Posterior vena cava (tissue), 2 donors: ENCODE measurements at regions of chr21 and their contacts with region 1.

Region 1: GRCh38 chr21:35178827-35179226 is 129.7 kb upstream of the RUNX1 start:
- DNase-seq: no peak

Region 2: GRCh38 chr21:35063450-35064172 is 115.2 kb before region 1 on chr21:
- intact Hi-C with region 1: no loop called
- DNase-seq: no peak

Region 3: DNA sequence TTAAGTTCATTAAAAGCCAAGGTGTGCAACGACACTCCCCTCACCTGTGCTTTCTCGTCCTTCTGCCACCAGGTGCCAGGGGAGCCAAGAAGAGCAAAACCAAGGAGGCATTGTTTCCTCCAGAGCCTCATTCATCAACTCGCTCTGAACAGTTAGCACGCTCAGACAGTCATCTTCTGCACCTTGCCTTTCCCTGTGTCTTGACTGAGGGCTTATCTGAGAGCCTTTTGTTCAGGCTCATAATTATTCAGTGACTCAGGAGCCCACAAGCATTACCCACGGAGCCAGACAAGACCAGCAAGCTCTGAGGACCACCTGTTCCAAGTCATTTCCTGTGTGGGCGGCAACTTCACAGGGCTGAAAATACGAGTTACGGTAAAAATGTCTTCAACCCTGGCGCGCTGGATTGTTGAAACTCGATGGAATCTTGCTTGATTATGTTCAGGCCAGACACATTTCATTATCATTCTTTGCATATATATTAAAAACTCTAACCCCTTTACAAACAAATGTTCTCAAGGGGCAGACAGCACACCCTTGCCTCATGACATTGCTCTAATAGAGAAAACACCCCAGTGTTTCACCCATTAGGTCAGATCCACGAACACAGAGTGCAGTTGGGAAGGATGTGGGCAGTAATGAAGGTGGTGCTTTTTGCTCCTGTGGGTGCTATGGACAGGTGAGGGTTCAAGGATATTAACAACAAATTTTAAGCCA is 40.0 kb before region 1 on chr21:
- intact Hi-C with region 1: loop called in 1 of 2 experiments (anchors 1 kb)
- DNase-seq: no peak

Region 4: DNA sequence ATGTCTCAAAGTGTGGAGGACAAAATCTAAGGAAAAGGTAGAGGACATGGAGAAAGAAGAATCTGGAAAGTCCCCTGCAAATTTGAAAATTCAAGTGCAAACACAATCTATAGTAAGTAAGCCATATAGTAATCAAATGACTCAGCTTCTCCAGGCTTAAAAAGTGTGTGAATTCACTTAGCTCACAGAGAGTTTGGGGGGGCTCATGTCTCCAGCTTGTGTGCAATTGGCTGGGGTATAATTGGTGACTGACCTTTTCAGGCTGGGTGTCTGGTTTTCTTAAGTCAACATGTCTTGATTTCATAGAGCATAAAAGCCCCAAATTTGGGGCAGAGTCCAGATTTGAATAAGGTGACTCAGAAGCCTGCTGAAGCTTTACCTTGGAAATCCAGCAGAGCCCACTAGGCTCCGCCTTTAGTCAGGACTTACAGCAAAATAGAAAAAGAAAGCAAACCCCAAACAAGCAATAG is 1292.5 kb after region 1 on chr21:
- intact Hi-C with region 1: no loop called
- DNase-seq: no peak